Psoas muscle (tissue), 8 donors: ENCODE measurements at regions of chr11 and their contacts with region 1.

Region 1: GRCh38 chr11:117903505-117904392 is 25.5 kb downstream of the TMPRSS13 start:
- DNase-seq: peak in 1 of 2 donors; percentile 32
- ATAC-seq: no peak
- H3K4me3 ChIP-seq: no peak overlapping the region
- H3K27ac ChIP-seq: no peak overlapping the region
- H3K4me1 ChIP-seq: no peaks in the 10 kb centered on the region
- H3K27me3 ChIP-seq: peaks cover 0 to 16% (median 5%) of the 10 kb centered on the region in 3 donors
- CTCF ChIP-seq: no peak

Region 2: DNA sequence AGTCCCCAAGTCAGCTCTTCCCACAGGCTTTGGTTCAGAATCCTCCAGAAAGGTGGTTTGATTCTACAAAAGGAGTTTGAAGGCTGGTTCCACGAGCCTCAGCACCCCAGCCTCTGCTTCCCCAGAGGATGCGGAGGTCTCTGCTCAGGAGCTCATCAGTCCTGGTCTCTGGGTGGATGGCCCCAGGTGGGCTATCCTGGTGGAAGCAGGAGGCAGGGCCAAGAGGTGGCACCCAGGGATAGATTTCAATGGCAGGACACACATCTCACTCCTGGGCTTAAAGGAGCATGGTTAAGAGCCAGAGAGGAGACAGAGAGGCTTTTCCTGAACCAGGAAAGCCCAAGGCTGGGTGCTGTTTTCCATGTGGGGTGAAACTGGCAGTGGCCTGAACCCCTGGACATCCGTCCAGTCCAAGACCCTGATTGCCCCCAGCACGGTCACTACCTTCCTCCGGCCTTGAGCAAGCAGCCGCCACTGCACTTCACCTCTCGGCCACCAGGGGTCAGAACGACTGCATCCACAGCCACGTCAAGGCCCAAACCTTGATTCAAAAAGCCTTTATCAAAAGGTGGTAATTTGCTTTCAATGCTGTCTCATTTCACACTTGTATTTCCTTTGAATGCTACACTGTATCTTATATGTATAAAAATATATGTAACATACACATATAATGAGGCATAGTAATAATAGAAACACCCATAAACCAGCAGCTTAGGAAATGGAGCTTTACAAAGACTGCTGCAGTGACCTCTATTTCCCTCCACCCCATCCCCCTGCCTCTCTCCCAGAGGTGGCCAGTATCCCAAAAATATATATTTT is 59.9 kb before region 1 on chr11:
- intact Hi-C with region 1: loop called in 1 of 2 experiments (anchors 2 kb)
- DNase-seq: peak; percentile 77 to 87
- ATAC-seq: peak; percentile 82 to 92 (median 83)
- H3K4me3 ChIP-seq: no peak overlapping the region
- H3K27ac ChIP-seq: no peak overlapping the region
- H3K4me1 ChIP-seq: no peaks in the 10 kb centered on the region
- H3K27me3 ChIP-seq: no peaks in the 10 kb centered on the region
- CTCF ChIP-seq: peak; percentile 99